Left lung (tissue), 14 donors: ENCODE measurements at regions of chr3 and their contacts with region 1.

Region 1: GRCh38 chr3:132730891-132731580 is 8.8 kb upstream of the NPHP3 start:
- DNase-seq: peak in 2 of 4 donors; percentile 56 to 75
- ATAC-seq: peak; percentile 93
- H3K4me3 ChIP-seq: no peak overlapping the region
- H3K27ac ChIP-seq: no peak overlapping the region
- H3K4me1 ChIP-seq: no peaks in the 10 kb centered on the region
- H3K27me3 ChIP-seq: no peaks in the 10 kb centered on the region
- CTCF ChIP-seq: peak; percentile 8 to 33

Region 2: DNA sequence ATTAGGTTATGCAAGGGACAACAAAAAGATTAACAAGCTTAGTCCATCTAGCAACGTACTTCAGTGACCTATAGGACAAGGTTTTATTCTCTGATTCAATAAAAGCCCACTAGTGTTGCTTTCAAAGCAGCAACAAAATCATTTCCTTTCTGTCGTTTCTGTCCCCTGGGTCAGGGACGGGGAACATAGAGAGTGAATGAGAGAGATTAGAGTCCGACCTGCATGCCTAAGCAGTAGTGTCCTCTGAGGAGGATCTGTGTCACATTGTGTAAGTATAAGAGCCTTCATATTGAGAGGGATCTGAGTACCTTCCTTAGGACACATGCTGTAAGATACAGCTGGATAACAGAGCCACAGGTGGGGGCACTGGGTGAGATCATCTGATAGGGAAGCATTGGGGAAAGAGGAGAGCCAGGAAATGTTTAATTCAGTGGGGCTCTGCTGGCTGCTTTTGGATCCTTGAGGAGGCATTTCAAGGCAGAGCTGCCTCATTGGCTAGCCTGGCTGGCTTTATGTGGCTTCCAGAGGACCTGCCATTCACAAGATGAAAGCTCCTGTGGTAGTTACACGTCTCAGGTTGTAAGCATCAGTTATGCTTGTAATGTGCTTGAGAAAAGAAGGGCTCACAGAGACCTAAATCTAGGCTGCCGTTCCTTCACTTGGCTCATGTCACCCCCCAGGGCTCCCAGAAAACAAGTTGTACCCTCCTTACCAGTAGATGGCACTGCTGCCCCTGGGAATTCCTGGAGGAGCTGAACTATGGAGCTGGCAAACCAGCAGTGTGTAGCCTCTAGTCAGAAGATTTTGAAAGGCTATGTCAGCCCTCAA is 309.9 kb after region 1 on chr3:
- intact Hi-C with region 1: loop called in 1 of 2 experiments (anchors 5 kb)
- DNase-seq: peak in 3 of 4 donors; percentile 71 to 92 (median 85)
- ATAC-seq: peak; percentile 75
- H3K4me3 ChIP-seq: no peak overlapping the region
- H3K27ac ChIP-seq: peak overlapping the region; percentile 1 to 42
- H3K4me1 ChIP-seq: peaks cover 0 to 22% of the 10 kb centered on the region in 2 donors
- H3K27me3 ChIP-seq: peaks cover 0 to 43% of the 10 kb centered on the region in 2 donors
- CTCF ChIP-seq: peak; percentile 68 to 69

Region 3: GRCh38 chr3:133384331-133385027 is 653.4 kb after region 1 on chr3:
- intact Hi-C with region 1: loop called in 1 of 2 experiments (anchors 10 kb)
- DNase-seq: peak; percentile 54 to 88 (median 78)
- ATAC-seq: peak; percentile 88
- H3K4me3 ChIP-seq: no peak overlapping the region
- H3K27ac ChIP-seq: no peak overlapping the region
- H3K4me1 ChIP-seq: peaks cover 0 to 10% of the 10 kb centered on the region in 2 donors
- H3K27me3 ChIP-seq: no peaks in the 10 kb centered on the region
- CTCF ChIP-seq: peak; percentile 76 to 82

Region 4: GRCh38 chr3:133413161-133414020 is 682.4 kb after region 1 on chr3:
- intact Hi-C with region 1: loop called in 1 of 2 experiments (anchors 10 kb)
- DNase-seq: peak in 2 of 4 donors; percentile 51 to 61
- ATAC-seq: peak; percentile 73
- H3K4me3 ChIP-seq: no peak overlapping the region
- H3K27ac ChIP-seq: peak overlapping the region in 1 of 2 donors; percentile 33
- H3K4me1 ChIP-seq: no peaks in the 10 kb centered on the region
- H3K27me3 ChIP-seq: no peaks in the 10 kb centered on the region
- CTCF ChIP-seq: no peak